HepG2 (cell line): ENCODE measurements at regions of chr16 and their contacts with region 1.

Region 1: DNA sequence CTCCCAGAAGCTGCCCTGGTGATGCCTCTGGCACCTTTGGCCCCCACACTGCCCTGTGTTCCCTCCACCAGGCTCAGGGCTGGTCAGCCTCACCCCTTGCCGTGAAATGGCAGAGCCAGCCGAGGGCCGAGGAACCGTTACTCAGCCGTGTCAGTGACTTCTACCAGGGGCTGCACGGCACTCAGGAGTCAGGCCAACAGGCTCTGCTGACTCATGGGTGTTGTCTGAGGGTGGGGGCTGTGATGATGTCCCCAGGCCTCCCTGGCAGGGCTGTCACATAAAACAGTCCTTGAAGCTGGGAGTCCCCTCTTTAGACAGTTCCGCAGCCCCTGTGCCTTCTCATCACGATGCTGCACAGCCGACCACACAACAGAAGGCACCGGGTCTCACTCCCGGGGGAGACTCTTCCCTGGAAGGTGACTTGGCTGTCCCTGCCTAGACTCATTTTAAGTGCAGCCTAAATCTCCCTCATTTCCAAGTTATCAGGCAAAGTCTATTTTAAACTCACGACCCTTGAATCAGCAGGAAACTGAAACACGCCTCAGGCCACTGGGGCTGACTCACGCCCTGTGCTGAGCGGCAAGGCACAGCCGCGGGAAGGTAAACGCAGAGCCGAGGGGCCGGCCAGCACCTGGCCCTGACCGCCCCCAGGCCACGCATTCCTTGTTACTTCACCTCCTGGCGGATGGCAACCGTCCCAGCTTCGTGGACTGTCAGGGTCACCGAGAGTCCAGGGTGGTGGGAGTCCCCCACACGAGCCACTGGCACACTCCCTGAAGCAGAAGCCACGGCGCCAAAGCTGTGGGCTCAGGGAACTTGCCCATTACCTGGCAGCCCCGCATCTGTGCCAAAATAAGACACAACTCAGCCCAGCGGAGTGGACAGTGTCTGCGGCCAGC is 102.6 kb downstream of the ZNF778 start:
- DNase-seq: peak; percentile 64
- ATAC-seq: peak; percentile 74
- H3K4me3 ChIP-seq: peak overlapping the region in 1 of 3 experiments; percentile 1; a peak in 1 of 6 replicates
- H3K27ac ChIP-seq: peak overlapping the region; percentile 30
- H3K4me1 ChIP-seq: peaks cover 67% of the 10 kb centered on the region
- H3K27me3 ChIP-seq: no peaks in the 10 kb centered on the region
- CTCF ChIP-seq: no peak
- EP300 ChIP-seq: no peak
- POLR2A ChIP-seq: 0 out of 4 replicates have a peak, but pooled peaks of 1 of the 2 experiments have one; percentile 7
- RAD21 ChIP-seq: no peak

Region 2: GRCh38 chr16:89217388-89218191 is 102.5 kb before region 1 on chr16 and contains the start of gene ZNF778:
- CTCF ChIA-PET with region 1: no interaction called
- POLR2A ChIA-PET with region 1: no interaction called
- in situ Hi-C with region 1: no loop called
- intact Hi-C with region 1: no loop called
- DNase-seq: peak; percentile 77
- ATAC-seq: peak; percentile 92
- H3K4me3 ChIP-seq: peak within 1 kb of the TSS; percentile 89 to 96 (median 92)
- H3K27ac ChIP-seq: peak within 1 kb of the TSS; percentile 85
- H3K4me1 ChIP-seq: peaks cover 10% of the 10 kb centered on the region; the same call in 1 of the 2 replicates
- H3K27me3 ChIP-seq: no peaks in the 10 kb centered on the region; a peak in 1 of 5 replicates
- CTCF ChIP-seq: peak; percentile 24
- EP300 ChIP-seq: peak in 1 of 2 experiments; percentile 59; a peak in 1 of 4 replicates
- POLR2A ChIP-seq: peak; percentile 84 to 91
- RAD21 ChIP-seq: peak; percentile 65
- total RNA-seq, gene ZNF778: 7.2 and 9.3 TPM in 2 replicates

Region 3: GRCh38 chr16:89268987-89269735 is 51.0 kb before region 1 on chr16:
- CTCF ChIA-PET with region 1: no interaction called
- POLR2A ChIA-PET with region 1: no interaction called
- in situ Hi-C with region 1: loop called (anchors 10 kb)
- intact Hi-C with region 1: no loop called
- DNase-seq: no peak
- ATAC-seq: no peak
- H3K4me3 ChIP-seq: no peak overlapping the region
- H3K27ac ChIP-seq: no peak overlapping the region
- H3K4me1 ChIP-seq: no peaks in the 10 kb centered on the region
- H3K27me3 ChIP-seq: no peaks in the 10 kb centered on the region
- CTCF ChIP-seq: no peak
- EP300 ChIP-seq: no peak
- POLR2A ChIP-seq: no peak; a peak in 1 of 4 replicates
- RAD21 ChIP-seq: no peak

Region 4: DNA sequence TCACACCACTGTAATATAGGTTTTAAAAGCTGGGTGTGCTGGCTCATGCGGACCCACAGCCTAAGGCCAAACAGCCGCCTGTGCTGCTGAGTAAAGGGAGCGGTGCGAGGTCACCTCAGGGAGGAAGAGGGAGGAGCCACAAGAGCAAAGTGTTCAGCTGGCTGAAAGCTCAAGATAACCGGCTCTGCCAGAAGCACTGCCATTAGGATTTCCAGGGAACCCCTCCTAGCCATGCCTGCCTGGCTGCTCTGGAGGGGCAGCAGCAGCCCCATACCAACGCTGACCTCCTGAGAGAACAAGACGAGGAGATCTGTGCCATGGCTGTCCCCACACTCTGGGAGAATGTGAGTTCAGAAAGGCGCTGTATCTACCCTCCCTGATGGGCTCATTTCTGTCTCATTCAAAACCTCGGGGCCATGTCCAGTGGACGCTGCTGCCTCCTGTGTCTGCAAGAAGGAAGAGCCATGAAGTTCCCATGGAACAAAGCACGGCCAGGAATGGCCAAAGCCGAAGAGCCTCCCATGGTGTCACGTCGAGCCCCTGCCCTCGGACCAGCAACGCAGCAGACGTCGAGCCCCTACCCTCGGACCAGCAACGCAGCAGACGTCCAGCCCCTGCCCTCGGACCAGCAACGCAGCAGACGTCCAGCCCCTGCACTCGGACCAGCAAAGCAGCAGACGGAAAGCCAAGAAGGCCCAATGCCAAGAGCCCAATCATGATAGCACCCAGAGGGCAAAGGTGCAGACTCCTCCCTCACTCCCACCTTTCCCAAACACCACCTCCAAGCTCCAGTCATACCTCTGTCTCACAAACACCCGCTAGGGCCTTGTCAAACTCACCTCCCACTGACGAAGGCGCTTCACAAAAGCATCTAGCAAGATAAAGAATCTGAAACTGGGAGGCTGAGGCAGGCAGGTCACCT is 63.2 kb after region 1 on chr16:
- CTCF ChIA-PET with region 1: no interaction called
- POLR2A ChIA-PET with region 1: no interaction called
- in situ Hi-C with region 1: no loop called
- intact Hi-C with region 1: no loop called
- DNase-seq: peak; percentile 45
- ATAC-seq: peak; percentile 81
- H3K4me3 ChIP-seq: peak overlapping the region in 1 of 3 experiments; percentile 2; a peak in 1 of 6 replicates
- H3K27ac ChIP-seq: peak overlapping the region; percentile 9
- H3K4me1 ChIP-seq: peaks cover 50% of the 10 kb centered on the region
- H3K27me3 ChIP-seq: no peaks in the 10 kb centered on the region
- CTCF ChIP-seq: peak; percentile 41
- EP300 ChIP-seq: no peak
- POLR2A ChIP-seq: no peak
- RAD21 ChIP-seq: 0 out of 2 replicates have a peak, but pooled peaks have one; percentile 28